ENCODE measurements at regions of chr2 and their contacts with region 1.

Region 1: GRCh38 chr2:231056453-231057424 is at the start of gene PSMD1:
- DNase-seq: peak; percentile 55
- H3K4me3 ChIP-seq: peak within 1 kb of the TSS; percentile 89
- CTCF ChIP-seq: peak; percentile 98

Region 2: DNA sequence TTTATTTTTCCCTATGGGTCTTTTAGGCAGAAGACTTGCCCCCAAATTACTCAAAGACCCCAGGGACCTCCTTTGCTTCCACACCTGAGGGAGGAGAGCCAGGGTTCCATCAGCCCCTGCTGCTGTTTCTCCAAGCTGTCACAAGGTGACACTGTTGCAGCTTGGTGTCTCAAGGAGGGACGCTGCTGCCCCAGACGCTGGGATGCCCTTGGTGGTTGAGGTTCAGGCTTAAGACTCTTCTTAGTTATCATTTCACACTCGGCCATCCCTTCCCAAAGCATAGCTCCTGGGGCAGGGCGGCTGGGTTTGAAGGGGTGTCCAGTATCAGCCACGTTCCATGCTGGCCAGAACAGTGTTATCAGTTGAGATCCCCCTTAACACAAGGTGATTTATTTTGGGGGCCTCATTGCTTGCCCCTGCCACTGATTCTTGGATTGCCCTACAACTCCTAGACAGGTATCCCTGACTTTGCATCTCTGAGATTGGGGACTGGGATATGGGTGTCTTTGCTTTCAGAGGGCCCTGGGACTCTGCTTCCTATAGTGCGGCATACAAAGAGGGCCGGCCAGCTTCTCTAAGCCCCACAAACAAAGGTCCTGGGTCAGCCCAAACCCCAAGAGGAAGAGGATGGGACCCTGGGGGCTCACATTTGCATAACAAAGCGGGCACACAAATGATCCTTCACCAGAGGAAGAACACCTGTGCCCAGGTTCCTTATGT is 154.4 kb before region 1 on chr2:
- CTCF ChIA-PET with region 1: interaction called, 52 read pairs
- POLR2A ChIA-PET with region 1: interaction called, 3 read pairs
- DNase-seq: peak; percentile 10
- H3K4me3 ChIP-seq: no peak overlapping the region
- CTCF ChIP-seq: peak; percentile 96

Region 3: DNA sequence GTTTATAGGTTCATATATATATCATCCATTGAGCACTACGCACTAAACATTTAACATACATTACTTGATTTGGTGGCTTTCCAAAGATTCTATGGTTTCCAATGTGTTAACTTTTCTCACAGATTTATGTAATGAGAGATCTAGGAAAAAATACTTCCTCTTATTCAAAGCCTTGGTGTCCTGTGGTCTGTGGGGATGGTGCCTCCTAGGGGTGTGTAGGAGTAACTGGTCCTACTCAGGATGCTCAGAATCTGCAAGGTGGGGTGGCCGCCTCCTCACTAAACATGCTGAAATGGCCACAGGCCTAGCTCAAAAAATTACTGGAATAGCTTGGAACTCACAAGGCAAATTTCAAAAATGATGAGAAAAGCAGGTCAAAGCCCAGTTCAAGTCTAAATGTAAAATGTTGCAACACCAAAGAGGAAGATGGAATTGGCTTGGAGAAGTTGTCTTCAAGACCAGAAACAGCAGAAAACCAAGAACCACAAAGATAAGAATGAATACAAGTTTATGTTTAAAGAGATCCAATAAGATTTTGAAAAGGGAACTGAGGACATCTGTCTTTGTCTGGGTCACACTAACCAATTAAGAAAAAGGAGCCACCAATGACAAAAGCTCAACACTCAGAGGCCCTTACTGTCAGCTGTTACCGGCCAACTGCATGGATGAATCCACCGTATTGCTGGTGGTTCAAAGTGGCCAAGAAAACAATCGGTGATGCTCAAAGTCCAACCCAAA is 143.2 kb before region 1 on chr2:
- CTCF ChIA-PET with region 1: interaction called, 11 read pairs
- POLR2A ChIA-PET with region 1: no interaction called
- DNase-seq: no peak
- H3K4me3 ChIP-seq: no peak overlapping the region
- CTCF ChIP-seq: peak; percentile 0

Region 4: GRCh38 chr2:231034291-231034882 is 22.4 kb before region 1 on chr2:
- CTCF ChIA-PET with region 1: interaction called, 17 read pairs
- POLR2A ChIA-PET with region 1: no interaction called
- DNase-seq: no peak
- H3K4me3 ChIP-seq: no peak overlapping the region
- CTCF ChIP-seq: no peak

Region 5: DNA sequence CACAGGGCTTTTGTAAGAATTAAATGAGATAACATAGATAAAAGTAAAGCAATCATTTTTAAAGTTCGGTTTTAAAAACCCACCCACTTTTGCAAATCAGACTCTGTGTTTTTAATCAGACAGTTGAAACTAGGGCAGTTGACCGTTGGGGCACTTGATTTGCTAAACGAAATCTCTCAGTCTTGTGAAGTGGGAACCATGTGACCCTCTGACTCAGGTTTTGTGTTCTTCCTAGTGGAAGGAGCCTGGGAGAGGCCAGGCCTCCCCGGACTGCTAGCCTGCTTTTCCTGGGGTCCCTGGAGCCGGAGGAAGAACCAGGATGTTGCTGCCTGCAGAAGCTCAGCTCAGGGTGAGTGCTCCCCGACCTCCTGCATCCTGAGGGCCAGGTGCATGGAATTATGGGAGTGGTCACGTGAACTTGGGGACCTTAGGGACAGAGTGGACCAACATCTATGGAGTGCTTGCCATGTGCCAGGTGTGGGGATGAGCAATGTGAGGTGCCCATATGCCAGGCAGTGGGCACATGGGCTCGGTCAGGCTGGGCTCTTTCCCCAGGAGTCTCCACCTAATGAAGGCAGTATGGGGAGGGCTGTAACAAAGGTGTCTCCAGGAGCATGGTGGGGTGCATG is 15.6 kb before region 1 on chr2:
- CTCF ChIA-PET with region 1: interaction called, 50 read pairs
- POLR2A ChIA-PET with region 1: interaction called, 3 read pairs
- DNase-seq: no peak
- H3K4me3 ChIP-seq: no peak overlapping the region
- CTCF ChIP-seq: no peak

Region 6: GRCh38 chr2:231068525-231069222 is 11.9 kb after region 1 on chr2:
- CTCF ChIA-PET with region 1: interaction called, 20 read pairs
- POLR2A ChIA-PET with region 1: no interaction called
- DNase-seq: no peak
- H3K4me3 ChIP-seq: no peak overlapping the region
- CTCF ChIP-seq: no peak

Measured in AG04449 (cell line).